Ovary (tissue), 10 donors: ENCODE measurements at regions of chr10 and their contacts with region 1.

Region 1: GRCh38 chr10:54335296-54335695 is 465.7 kb downstream of the PCDH15 start:
- DNase-seq: no peak
- H3K4me3 ChIP-seq: no peak overlapping the region
- H3K27ac ChIP-seq: no peak overlapping the region
- H3K4me1 ChIP-seq: no peaks in the 10 kb centered on the region
- H3K27me3 ChIP-seq: no peaks in the 10 kb centered on the region
- CTCF ChIP-seq: no peak
- EP300 ChIP-seq: no peak
- POLR2A ChIP-seq: no peak

Region 2: DNA sequence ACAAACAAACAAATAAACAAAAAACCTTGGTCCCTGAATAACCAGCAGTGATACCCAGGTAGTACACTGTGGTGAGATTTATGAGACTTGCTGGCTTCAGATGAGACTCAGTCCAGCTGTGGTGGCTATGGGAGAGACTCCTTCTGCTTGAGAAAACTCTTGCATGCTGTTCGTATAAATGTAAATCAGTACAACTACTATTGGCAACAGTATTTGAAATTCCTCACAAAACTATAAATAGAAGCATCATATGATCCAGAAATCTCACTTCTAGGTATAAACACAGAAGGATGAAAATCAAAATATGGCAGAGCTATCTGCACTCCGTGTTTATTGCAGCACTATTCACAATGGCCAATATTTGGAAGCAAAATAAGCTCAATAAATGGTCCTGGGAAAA is 226.3 kb before region 1 on chr10:
- intact Hi-C with region 1: no loop called
- DNase-seq: no peak
- H3K4me3 ChIP-seq: no peak overlapping the region
- H3K27ac ChIP-seq: no peak overlapping the region
- H3K4me1 ChIP-seq: no peaks in the 10 kb centered on the region
- H3K27me3 ChIP-seq: no peaks in the 10 kb centered on the region
- CTCF ChIP-seq: no peak
- EP300 ChIP-seq: no peak
- POLR2A ChIP-seq: no peak

Region 3: DNA sequence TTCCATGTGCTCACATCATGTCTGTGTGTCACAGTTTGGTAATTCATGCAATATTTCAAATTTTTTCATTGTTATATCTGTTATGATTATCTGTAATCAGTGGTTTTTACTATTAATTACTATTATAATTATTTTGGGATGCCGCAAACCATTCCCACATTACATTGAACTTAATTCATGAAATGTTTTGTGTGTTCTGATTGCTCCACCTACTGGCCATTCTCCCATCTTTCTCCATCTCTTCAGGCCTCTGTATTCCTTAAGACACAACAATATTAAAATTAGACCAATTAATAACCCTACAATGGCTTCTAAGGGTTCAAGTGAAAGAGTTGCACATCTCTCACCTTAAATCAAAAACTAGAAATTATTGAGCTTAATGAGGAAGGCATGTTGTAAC is 67.3 kb after region 1 on chr10:
- intact Hi-C with region 1: no loop called
- DNase-seq: no peak
- H3K4me3 ChIP-seq: no peak overlapping the region
- H3K27ac ChIP-seq: no peak overlapping the region
- H3K4me1 ChIP-seq: no peaks in the 10 kb centered on the region
- H3K27me3 ChIP-seq: no peaks in the 10 kb centered on the region
- CTCF ChIP-seq: no peak
- EP300 ChIP-seq: no peak
- POLR2A ChIP-seq: no peak

Region 4: GRCh38 chr10:54434782-54435181 is 99.5 kb after region 1 on chr10:
- intact Hi-C with region 1: loop called in 1 of 4 experiments (anchors 10 kb)
- DNase-seq: no peak
- H3K4me3 ChIP-seq: no peak overlapping the region
- H3K27ac ChIP-seq: no peak overlapping the region
- H3K4me1 ChIP-seq: no peaks in the 10 kb centered on the region
- H3K27me3 ChIP-seq: no peaks in the 10 kb centered on the region
- CTCF ChIP-seq: no peak
- EP300 ChIP-seq: no peak
- POLR2A ChIP-seq: no peak

Region 5: GRCh38 chr10:54496852-54497251 is 161.6 kb after region 1 on chr10:
- intact Hi-C with region 1: no loop called
- DNase-seq: peak in 1 of 5 donors; percentile 1
- H3K4me3 ChIP-seq: no peak overlapping the region
- H3K27ac ChIP-seq: no peak overlapping the region
- H3K4me1 ChIP-seq: no peaks in the 10 kb centered on the region
- H3K27me3 ChIP-seq: no peaks in the 10 kb centered on the region
- CTCF ChIP-seq: no peak
- EP300 ChIP-seq: no peak
- POLR2A ChIP-seq: no peak

Region 6: GRCh38 chr10:54530299-54530698 is 195.0 kb after region 1 on chr10:
- intact Hi-C with region 1: no loop called
- DNase-seq: no peak
- H3K4me3 ChIP-seq: no peak overlapping the region
- H3K27ac ChIP-seq: no peak overlapping the region
- H3K4me1 ChIP-seq: no peaks in the 10 kb centered on the region
- H3K27me3 ChIP-seq: no peaks in the 10 kb centered on the region
- CTCF ChIP-seq: no peak
- EP300 ChIP-seq: no peak
- POLR2A ChIP-seq: no peak